ENCODE measurements at regions of chr7 and their contacts with region 1.

Region 1: GRCh38 chr7:77759294-77759889 is 38.8 kb downstream of the TMEM60 start:
- DNase-seq: peak in 8 of 9 donors; percentile 55 to 80 (median 70)
- ATAC-seq: peak; percentile 93
- H3K4me3 ChIP-seq: no peak overlapping the region
- H3K4me3 Mint-ChIP-seq: peak overlapping the region in 1 of 10 donors; percentile 29
- H3K27ac ChIP-seq: no peak overlapping the region
- H3K27ac Mint-ChIP-seq: peak overlapping the region in 7 of 9 donors; percentile 3 to 72 (median 32)
- H3K4me1 ChIP-seq: peaks cover 0 to 9% of the 10 kb centered on the region in 2 donors
- H3K4me1 Mint-ChIP-seq: peaks cover 17 to 64% (median 53%) of the 10 kb centered on the region in 7 donors
- H3K27me3 ChIP-seq: no peaks in the 10 kb centered on the region
- H3K27me3 Mint-ChIP-seq: no peaks in the 10 kb centered on the region

Region 2: GRCh38 chr7:77651573-77652162 is 107.7 kb before region 1 on chr7:
- CTCF ChIA-PET with region 1: interaction called, 67 read pairs
- POLR2A ChIA-PET with region 1: no interaction called
- intact Hi-C with region 1: loop called (anchors 1 kb)
- DNase-seq: peak in 7 of 9 donors; percentile 9 to 56 (median 38)
- ATAC-seq: peak; percentile 52
- H3K4me3 ChIP-seq: no peak overlapping the region
- H3K4me3 Mint-ChIP-seq: no peak overlapping the region
- H3K27ac ChIP-seq: no peak overlapping the region
- H3K27ac Mint-ChIP-seq: no peak overlapping the region
- H3K4me1 ChIP-seq: no peaks in the 10 kb centered on the region
- H3K4me1 Mint-ChIP-seq: peaks cover 0 to 2% (median 0%) of the 10 kb centered on the region in 7 donors
- H3K27me3 ChIP-seq: no peaks in the 10 kb centered on the region
- H3K27me3 Mint-ChIP-seq: no peaks in the 10 kb centered on the region

Region 3: GRCh38 chr7:77657427-77658224 is 101.8 kb before region 1 on chr7:
- CTCF ChIA-PET with region 1: interaction called, 67 read pairs
- POLR2A ChIA-PET with region 1: interaction called, 4 read pairs
- intact Hi-C with region 1: loop called (anchors 1 kb)
- DNase-seq: peak in 7 of 9 donors; percentile 16 to 54 (median 44)
- ATAC-seq: peak; percentile 69
- H3K4me3 ChIP-seq: no peak overlapping the region
- H3K4me3 Mint-ChIP-seq: no peak overlapping the region
- H3K27ac ChIP-seq: no peak overlapping the region
- H3K27ac Mint-ChIP-seq: no peak overlapping the region
- H3K4me1 ChIP-seq: no peaks in the 10 kb centered on the region
- H3K4me1 Mint-ChIP-seq: no peaks in the 10 kb centered on the region
- H3K27me3 ChIP-seq: no peaks in the 10 kb centered on the region
- H3K27me3 Mint-ChIP-seq: no peaks in the 10 kb centered on the region

Region 4: GRCh38 chr7:77674878-77675277 is 84.5 kb before region 1 on chr7:
- CTCF ChIA-PET with region 1: interaction called, 8 read pairs
- POLR2A ChIA-PET with region 1: no interaction called
- intact Hi-C with region 1: loop called in 1 of 2 experiments (anchors 5 kb)
- DNase-seq: no peak
- ATAC-seq: no peak
- H3K4me3 ChIP-seq: no peak overlapping the region
- H3K4me3 Mint-ChIP-seq: no peak overlapping the region
- H3K27ac ChIP-seq: no peak overlapping the region
- H3K27ac Mint-ChIP-seq: no peak overlapping the region
- H3K4me1 ChIP-seq: no peaks in the 10 kb centered on the region
- H3K4me1 Mint-ChIP-seq: no peaks in the 10 kb centered on the region
- H3K27me3 ChIP-seq: no peaks in the 10 kb centered on the region
- H3K27me3 Mint-ChIP-seq: no peaks in the 10 kb centered on the region

Region 5: DNA sequence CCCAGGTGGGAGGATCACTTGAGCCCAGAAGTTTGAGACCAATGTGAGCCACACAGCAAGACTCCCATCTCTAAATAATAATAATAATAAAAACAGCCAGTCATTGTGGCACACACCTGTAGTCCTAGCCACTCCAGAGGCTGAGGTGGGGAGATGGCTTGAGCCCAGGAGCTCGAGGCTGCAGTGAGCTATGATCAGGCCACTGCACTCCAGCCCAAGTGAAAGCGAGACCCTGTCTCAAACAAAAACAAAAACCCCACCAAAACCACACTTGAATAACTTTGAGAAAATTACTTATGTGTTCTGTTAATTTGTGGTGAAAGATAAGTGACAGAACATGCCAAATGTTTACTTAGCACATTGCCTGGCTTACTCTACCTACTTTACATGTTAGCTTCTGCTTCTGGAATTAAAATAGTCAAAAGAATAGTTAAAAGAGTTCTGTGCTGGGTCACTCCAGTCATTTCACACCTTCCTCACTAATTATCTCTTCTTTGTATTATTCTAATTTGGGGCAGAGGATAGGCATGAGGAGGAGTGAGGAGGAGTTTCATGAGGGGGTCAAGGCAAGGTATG is 29.0 kb after region 1 on chr7:
- CTCF ChIA-PET with region 1: no interaction called
- POLR2A ChIA-PET with region 1: no interaction called
- intact Hi-C with region 1: no loop called
- DNase-seq: no peak
- ATAC-seq: no peak
- H3K4me3 ChIP-seq: no peak overlapping the region
- H3K4me3 Mint-ChIP-seq: no peak overlapping the region
- H3K27ac ChIP-seq: no peak overlapping the region
- H3K27ac Mint-ChIP-seq: peak overlapping the region in 7 of 9 donors; percentile 2 to 91 (median 26)
- H3K4me1 ChIP-seq: no peaks in the 10 kb centered on the region
- H3K4me1 Mint-ChIP-seq: peaks cover 0 to 6% (median 4%) of the 10 kb centered on the region in 7 donors
- H3K27me3 ChIP-seq: no peaks in the 10 kb centered on the region
- H3K27me3 Mint-ChIP-seq: no peaks in the 10 kb centered on the region

Region 6: GRCh38 chr7:77798394-77799077 is 39.1 kb after region 1 on chr7 and contains the starts of genes PHTF2 and TMEM60:
- CTCF ChIA-PET with region 1: no interaction called
- POLR2A ChIA-PET with region 1: no interaction called
- intact Hi-C with region 1: loop called in 1 of 2 experiments (anchors 1 kb)
- DNase-seq: peak; percentile 78 to 97 (median 95)
- ATAC-seq: peak; percentile 94
- H3K4me3 ChIP-seq: peak within 1 kb of the TSS; percentile 85
- H3K4me3 Mint-ChIP-seq: peak within 1 kb of the TSS; percentile 87 to 99 (median 96)
- H3K27ac ChIP-seq: peak within 1 kb of the TSS; percentile 73
- H3K27ac Mint-ChIP-seq: peak within 1 kb of the TSS; percentile 89 to 96 (median 94)
- H3K4me1 ChIP-seq: peaks cover 45 to 52% of the 10 kb centered on the region in 2 donors
- H3K4me1 Mint-ChIP-seq: peaks cover 53 to 83% (median 79%) of the 10 kb centered on the region in 7 donors
- H3K27me3 ChIP-seq: no peaks in the 10 kb centered on the region
- H3K27me3 Mint-ChIP-seq: no peaks in the 10 kb centered on the region
- total RNA-seq, gene PHTF2: 17.6 to 42.1 (median 22.4) TPM
- total RNA-seq, gene TMEM60: 3.7 to 16.9 (median 12.0) TPM

Region 7: DNA sequence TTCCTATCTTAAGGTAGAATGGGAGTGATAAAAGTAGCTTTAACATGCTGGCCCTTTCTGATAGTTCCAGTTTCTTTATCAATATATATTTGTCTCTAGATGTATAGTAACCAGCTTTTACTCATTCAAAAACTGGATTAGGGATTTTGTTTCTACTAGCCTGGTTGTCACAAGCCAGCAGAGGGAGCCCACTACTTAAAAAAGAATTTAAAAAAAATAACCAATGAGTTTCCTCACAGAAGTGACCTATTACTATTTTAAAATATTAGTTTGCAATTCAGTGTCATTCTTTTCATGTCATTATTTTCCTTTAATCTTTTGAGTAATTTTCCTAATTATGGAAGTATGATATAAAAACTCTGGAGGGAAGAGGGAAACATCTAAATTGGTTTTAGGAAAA is 181.3 kb after region 1 on chr7:
- CTCF ChIA-PET with region 1: no interaction called
- POLR2A ChIA-PET with region 1: no interaction called
- intact Hi-C with region 1: loop called (anchors 1 to 5 kb)
- DNase-seq: no peak
- ATAC-seq: no peak
- H3K4me3 ChIP-seq: no peak overlapping the region
- H3K4me3 Mint-ChIP-seq: no peak overlapping the region
- H3K27ac ChIP-seq: no peak overlapping the region
- H3K27ac Mint-ChIP-seq: no peak overlapping the region
- H3K4me1 ChIP-seq: no peaks in the 10 kb centered on the region
- H3K4me1 Mint-ChIP-seq: peaks cover 8 to 14% (median 9%) of the 10 kb centered on the region in 7 donors
- H3K27me3 ChIP-seq: no peaks in the 10 kb centered on the region
- H3K27me3 Mint-ChIP-seq: no peaks in the 10 kb centered on the region

Region 8: DNA sequence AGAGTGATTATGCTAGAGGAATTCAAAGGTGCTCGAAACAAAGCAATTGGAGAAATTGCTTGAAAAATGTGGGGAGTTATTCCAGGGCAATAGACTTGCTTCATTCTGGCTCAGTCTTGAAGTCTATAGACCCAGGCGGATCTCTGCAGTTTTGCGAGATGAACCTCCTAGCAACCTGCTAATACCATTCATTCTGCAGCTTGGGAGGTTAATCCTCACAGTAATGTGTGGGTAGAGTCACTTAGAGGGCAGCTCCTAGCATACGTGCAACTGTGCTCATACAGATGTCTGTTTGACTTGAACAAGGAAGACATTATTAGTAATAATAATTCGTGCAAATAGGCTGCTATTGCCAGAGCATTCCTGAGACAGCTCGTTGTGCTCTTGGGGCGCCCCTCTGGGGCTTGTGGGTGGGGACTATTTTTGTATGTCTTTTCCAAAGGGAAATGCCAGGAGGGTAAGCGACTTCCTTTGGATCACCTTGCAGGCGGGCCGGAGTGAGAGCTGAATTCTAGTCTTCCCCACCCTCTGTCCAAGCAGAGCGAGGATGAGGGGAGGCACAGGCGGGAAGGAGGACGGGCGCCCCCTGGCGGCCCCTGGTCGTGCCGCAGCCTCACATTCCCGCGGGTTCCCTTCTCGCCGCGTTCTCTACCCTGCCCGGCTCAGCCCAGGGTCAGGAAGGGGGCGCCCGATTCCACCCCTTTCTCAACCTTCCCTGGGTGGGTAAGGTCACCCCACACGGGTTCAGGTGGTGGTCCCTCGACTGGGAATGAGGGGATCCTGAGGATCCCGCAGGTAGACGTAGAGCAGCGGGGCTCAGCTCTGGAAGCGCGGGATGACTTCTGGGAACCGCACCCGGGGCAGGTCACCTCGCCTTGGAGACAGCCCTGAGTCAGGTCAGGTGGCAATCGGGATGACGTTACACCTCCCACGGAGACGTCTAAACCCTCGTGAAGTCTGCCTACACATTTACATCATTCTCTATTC is 280.7 kb after region 1 on chr7:
- CTCF ChIA-PET with region 1: no interaction called
- POLR2A ChIA-PET with region 1: no interaction called
- intact Hi-C with region 1: loop called in 1 of 2 experiments (anchors 1 kb)
- DNase-seq: peak in 6 of 9 donors; percentile 23 to 55 (median 44)
- ATAC-seq: peak; percentile 80
- H3K4me3 ChIP-seq: no peak overlapping the region
- H3K4me3 Mint-ChIP-seq: no peak overlapping the region
- H3K27ac ChIP-seq: no peak overlapping the region
- H3K27ac Mint-ChIP-seq: no peak overlapping the region
- H3K4me1 ChIP-seq: no peaks in the 10 kb centered on the region
- H3K4me1 Mint-ChIP-seq: peaks cover 0 to 5% (median 0%) of the 10 kb centered on the region in 7 donors
- H3K27me3 ChIP-seq: peaks cover 0 to 3% of the 10 kb centered on the region in 2 donors
- H3K27me3 Mint-ChIP-seq: peaks cover 11 to 26% (median 21%) of the 10 kb centered on the region in 5 donors

Region 9: GRCh38 chr7:78326876-78327275 is 567.5 kb after region 1 on chr7:
- CTCF ChIA-PET with region 1: no interaction called
- POLR2A ChIA-PET with region 1: no interaction called
- intact Hi-C with region 1: no loop called
- DNase-seq: no peak
- ATAC-seq: no peak
- H3K4me3 ChIP-seq: no peak overlapping the region
- H3K4me3 Mint-ChIP-seq: no peak overlapping the region
- H3K27ac ChIP-seq: no peak overlapping the region
- H3K27ac Mint-ChIP-seq: no peak overlapping the region
- H3K4me1 ChIP-seq: no peaks in the 10 kb centered on the region
- H3K4me1 Mint-ChIP-seq: no peaks in the 10 kb centered on the region
- H3K27me3 ChIP-seq: no peaks in the 10 kb centered on the region
- H3K27me3 Mint-ChIP-seq: peaks cover 0 to 4% (median 4%) of the 10 kb centered on the region in 5 donors

Region 10: DNA sequence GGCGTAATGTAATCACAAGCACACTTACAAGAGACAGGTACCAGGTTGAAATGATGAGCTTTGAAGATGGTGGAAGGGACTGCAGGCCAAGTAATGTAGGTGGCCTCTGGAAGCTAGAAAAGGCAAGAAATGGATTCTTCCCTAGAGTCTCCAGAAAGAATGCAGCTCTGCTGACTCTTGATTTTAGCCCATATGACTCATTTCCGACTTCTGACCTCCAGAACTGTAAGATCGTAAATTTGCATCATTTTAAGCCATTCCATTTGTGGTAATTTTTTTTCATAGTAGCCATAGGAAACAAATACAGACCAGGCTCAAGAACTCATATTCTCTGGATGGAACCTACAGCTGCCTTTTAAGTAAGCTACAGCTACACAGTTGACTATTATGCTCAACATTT is 1378.5 kb after region 1 on chr7:
- CTCF ChIA-PET with region 1: no interaction called
- POLR2A ChIA-PET with region 1: no interaction called
- intact Hi-C with region 1: no loop called
- DNase-seq: no peak
- ATAC-seq: no peak
- H3K4me3 ChIP-seq: no peak overlapping the region
- H3K4me3 Mint-ChIP-seq: no peak overlapping the region
- H3K27ac ChIP-seq: no peak overlapping the region
- H3K27ac Mint-ChIP-seq: no peak overlapping the region
- H3K4me1 ChIP-seq: no peaks in the 10 kb centered on the region
- H3K4me1 Mint-ChIP-seq: no peaks in the 10 kb centered on the region
- H3K27me3 ChIP-seq: no peaks in the 10 kb centered on the region
- H3K27me3 Mint-ChIP-seq: no peaks in the 10 kb centered on the region